A549 (cell line): ENCODE measurements at regions of chr16 and their contacts with region 1.

Region 1: DNA sequence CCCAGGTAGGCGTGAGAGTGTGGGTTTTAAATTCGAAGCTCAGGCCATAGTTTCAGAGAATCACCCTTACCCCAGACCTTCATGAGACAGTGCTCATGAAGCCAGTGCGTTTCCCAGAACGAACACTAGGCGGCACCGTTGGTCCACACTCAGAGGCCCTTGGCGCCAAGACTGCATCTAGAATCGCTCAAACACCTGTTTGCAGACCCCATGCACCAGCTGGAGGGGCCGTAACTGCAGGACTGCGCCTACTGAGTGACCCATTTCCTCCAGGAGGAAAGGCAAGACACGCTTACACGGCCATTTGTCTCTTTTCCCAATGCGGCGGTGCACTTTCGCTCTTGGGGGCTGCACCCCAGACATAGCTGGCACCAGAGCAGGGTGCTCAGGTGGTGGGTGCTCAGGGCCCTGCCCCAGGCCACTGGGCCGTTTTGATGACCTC is 34.0 kb downstream of the ADGRG5 start:
- DNase-seq: peak; percentile 73 to 78
- ATAC-seq: peak; percentile 89 to 95
- H3K4me3 ChIP-seq: no peak overlapping the region
- H3K27ac ChIP-seq: peak overlapping the region in 1 of 2 experiments; percentile 34; a peak in 1 of 6 replicates
- H3K4me1 ChIP-seq: peaks cover 6% of the 10 kb centered on the region; the same call in 2 of the 3 replicates
- CTCF ChIP-seq: peak; percentile 97
- EP300 ChIP-seq: no peak
- POLR2A ChIP-seq: no peak
- RAD21 ChIP-seq: peak; percentile 95 to 99

Region 2: GRCh38 chr16:57564571-57565270 is 11.7 kb before region 1 on chr16:
- CTCF ChIA-PET with region 1: interaction called, 50 read pairs
- POLR2A ChIA-PET with region 1: no interaction called
- DNase-seq: no peak
- ATAC-seq: peak; percentile 3 to 28; a peak in 2 of 6 replicates
- H3K4me3 ChIP-seq: no peak overlapping the region
- H3K27ac ChIP-seq: peak overlapping the region in 1 of 2 experiments; percentile 48; a peak in 2 of 6 replicates
- H3K4me1 ChIP-seq: 0 out of 3 replicates have a peak, but pooled peaks cover 5% of the 10 kb centered on the region
- CTCF ChIP-seq: no peak
- EP300 ChIP-seq: no peak
- POLR2A ChIP-seq: no peak
- RAD21 ChIP-seq: no peak

Region 3: GRCh38 chr16:57609541-57610401 is 33.3 kb after region 1 on chr16:
- CTCF ChIA-PET with region 1: interaction called, 29 read pairs
- POLR2A ChIA-PET with region 1: no interaction called
- DNase-seq: no peak
- ATAC-seq: peak in 1 of 2 experiments; percentile 21; a peak in 3 of 6 replicates
- H3K4me3 ChIP-seq: no peak overlapping the region
- H3K27ac ChIP-seq: peak overlapping the region; percentile 69 to 74
- H3K4me1 ChIP-seq: peaks cover 71% of the 10 kb centered on the region
- CTCF ChIP-seq: no peak
- EP300 ChIP-seq: no peak
- POLR2A ChIP-seq: no peak
- RAD21 ChIP-seq: peak in 1 of 2 experiments; percentile 10; a peak in 1 of 5 replicates

Region 4: GRCh38 chr16:57667526-57668258 is 91.2 kb after region 1 on chr16:
- CTCF ChIA-PET with region 1: interaction called, 14 read pairs
- POLR2A ChIA-PET with region 1: no interaction called
- DNase-seq: peak in 1 of 2 experiments; percentile 54
- ATAC-seq: peak; percentile 35 to 36; a peak in 4 of 6 replicates
- H3K4me3 ChIP-seq: no peak overlapping the region
- H3K27ac ChIP-seq: peak overlapping the region; percentile 61 to 71
- H3K4me1 ChIP-seq: peaks cover 16% of the 10 kb centered on the region
- CTCF ChIP-seq: no peak
- EP300 ChIP-seq: peak in 1 of 2 experiments; percentile 18; a peak in 1 of 5 replicates
- POLR2A ChIP-seq: no peak
- RAD21 ChIP-seq: no peak

Region 5: DNA sequence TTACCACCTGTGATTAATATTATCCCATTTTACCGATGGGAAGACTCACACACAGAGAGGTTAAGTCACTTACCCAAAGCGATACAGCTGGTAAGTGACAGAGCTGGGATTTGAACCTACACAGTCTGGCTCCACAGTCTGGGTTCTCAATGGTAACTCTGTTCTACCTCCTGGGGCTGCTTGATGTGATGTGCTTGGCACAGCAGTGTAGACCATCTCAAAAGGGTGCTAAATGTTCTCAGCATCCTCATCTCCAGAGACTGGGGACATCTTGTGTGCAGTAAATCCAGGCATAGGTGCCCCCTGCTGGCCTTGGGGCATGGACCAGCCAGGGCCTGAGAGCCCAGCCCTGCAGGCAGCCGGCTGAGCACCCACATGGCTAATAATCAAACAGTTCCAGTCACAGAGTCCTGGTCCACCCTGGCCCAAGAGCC is 143.7 kb after region 1 on chr16:
- CTCF ChIA-PET with region 1: interaction called, 103 read pairs
- POLR2A ChIA-PET with region 1: no interaction called
- DNase-seq: peak; percentile 72 to 75
- ATAC-seq: peak; percentile 96 to 97
- H3K4me3 ChIP-seq: no peak overlapping the region
- H3K27ac ChIP-seq: peak overlapping the region; percentile 25 to 32; a peak in 4 of 6 replicates
- H3K4me1 ChIP-seq: peaks cover 9% of the 10 kb centered on the region; the same call in 2 of the 3 replicates
- CTCF ChIP-seq: peak; percentile 82
- EP300 ChIP-seq: no peak
- POLR2A ChIP-seq: no peak
- RAD21 ChIP-seq: peak; percentile 82 to 83

Region 6: DNA sequence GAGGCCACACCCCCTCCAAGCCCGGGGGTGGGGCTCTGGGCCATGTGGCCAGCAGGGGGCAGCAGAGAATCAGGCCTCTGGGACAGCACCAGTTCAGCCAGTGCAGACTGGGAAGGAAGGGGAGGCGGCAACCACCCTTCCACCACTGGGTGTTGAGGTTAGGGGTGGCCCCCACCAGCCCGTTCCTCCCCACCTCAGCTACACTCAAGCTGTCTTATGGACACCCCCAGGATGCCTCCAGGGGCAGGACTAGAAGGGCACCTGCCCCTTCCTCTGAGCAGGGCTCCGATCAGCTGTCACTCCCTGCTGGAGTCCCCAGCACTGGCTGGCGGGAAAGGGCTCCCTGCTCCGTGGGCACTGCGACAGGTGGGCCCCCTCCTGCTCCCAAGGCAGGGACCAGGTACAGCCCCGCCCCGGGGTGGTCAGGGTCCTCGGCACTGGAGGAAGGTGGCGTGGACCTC is 180.9 kb after region 1 on chr16:
- CTCF ChIA-PET with region 1: interaction called, 24 read pairs
- POLR2A ChIA-PET with region 1: no interaction called
- DNase-seq: peak; percentile 83 to 89
- ATAC-seq: peak; percentile 36 to 83
- H3K4me3 ChIP-seq: no peak overlapping the region
- H3K27ac ChIP-seq: peak overlapping the region; percentile 69 to 92
- H3K4me1 ChIP-seq: peaks cover 76% of the 10 kb centered on the region
- CTCF ChIP-seq: peak; percentile 88
- EP300 ChIP-seq: no peak
- POLR2A ChIP-seq: no peak
- RAD21 ChIP-seq: peak; percentile 83 to 90

Region 7: DNA sequence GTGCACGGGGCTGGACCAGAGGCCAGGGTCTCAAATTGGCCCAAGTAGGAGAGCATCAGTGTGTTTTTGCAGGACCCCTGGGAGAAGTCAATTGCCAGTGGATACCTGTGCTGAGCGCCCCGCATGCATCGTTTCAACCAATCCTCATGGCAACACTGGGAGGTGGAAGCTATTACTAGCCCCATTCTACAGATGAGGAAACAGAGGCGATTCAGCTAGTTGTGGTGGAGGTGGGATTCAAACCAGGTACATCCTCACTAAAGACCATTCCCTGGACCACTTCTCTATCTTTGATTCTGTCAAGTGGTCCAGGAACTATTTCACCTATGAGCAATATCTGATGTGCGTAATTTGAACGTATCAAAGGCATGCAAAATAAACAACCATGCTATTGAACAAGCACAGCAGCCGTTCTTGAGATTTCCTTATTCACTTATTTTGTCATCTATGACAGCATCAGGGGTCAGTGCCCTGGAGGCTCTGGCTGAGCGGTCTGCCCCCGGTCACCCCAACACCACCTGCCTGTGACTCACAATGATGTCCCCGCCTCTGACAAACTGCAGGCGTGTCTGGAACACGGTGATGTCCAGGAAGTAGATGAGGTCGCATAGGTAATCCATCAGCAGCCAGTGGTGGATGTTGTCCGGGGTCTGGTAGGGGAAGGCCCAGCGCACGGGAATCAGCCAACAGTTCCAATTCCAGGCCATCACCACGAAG is 340.4 kb after region 1 on chr16:
- CTCF ChIA-PET with region 1: no interaction called
- POLR2A ChIA-PET with region 1: no interaction called
- DNase-seq: peak in 1 of 2 experiments; percentile 28
- ATAC-seq: peak in 1 of 2 experiments; percentile 42; a peak in 1 of 6 replicates
- H3K4me3 ChIP-seq: no peak overlapping the region
- H3K27ac ChIP-seq: no peak overlapping the region
- H3K4me1 ChIP-seq: peaks cover 3% of the 10 kb centered on the region; the same call in 1 of the 3 replicates
- CTCF ChIP-seq: no peak
- EP300 ChIP-seq: no peak
- POLR2A ChIP-seq: no peak
- RAD21 ChIP-seq: no peak

Region 8: DNA sequence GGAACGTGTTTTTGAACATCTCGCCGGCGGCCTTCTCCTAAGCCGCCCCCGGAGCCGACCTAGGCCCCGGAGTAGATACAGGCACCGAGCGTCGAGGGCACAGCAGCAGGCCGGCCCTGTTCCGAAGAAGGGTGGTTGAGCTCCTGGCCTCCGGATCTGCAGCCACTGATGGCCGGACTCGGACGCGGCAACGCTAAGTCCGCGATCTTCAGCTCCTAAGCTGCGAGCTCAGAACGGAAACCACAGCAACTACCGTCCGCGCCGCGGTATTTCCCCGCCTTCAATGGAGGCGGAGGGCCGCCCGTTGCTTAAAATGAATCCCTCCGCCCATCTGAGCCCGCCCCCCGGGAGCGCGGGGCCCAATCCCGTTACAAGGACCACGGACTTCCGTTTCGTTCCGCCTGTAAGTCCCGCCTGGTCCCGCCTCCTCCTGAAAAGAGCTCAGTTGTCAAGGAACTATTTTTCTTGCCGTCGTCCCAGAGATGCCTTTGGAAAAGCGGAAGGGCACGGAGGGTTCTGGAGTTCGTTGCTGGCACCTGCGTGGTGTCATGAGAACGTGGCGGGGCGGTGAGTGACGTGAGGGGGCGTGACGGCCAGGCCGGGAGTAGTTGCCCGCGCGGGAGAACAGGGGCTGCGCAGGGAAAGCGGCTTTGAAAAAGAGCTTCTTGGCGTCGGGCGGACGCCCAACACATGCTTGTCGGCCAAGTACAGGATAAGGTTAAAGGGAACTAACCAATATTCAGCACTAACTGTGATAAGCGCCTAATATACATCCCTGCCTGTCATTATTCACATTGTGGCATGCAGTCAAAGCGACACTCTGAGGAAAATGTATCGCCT is 552.9 kb after region 1 on chr16 and contains the start of gene CFAP20:
- CTCF ChIA-PET with region 1: interaction called, 10 read pairs
- POLR2A ChIA-PET with region 1: no interaction called
- DNase-seq: peak; percentile 91 to 100
- ATAC-seq: peak; percentile 92 to 96
- H3K4me3 ChIP-seq: peak within 1 kb of the TSS; percentile 96
- H3K27ac ChIP-seq: peak within 1 kb of the TSS; percentile 85 to 88
- H3K4me1 ChIP-seq: peaks cover 21% of the 10 kb centered on the region
- CTCF ChIP-seq: no peak
- EP300 ChIP-seq: no peak
- POLR2A ChIP-seq: peak; percentile 84
- RAD21 ChIP-seq: no peak
- polyA plus RNA-seq, gene CFAP20: 51.0 and 53.1 TPM in 2 replicates